ENCODE measurements at regions of chr16 and their contacts with region 1.

Region 1: DNA sequence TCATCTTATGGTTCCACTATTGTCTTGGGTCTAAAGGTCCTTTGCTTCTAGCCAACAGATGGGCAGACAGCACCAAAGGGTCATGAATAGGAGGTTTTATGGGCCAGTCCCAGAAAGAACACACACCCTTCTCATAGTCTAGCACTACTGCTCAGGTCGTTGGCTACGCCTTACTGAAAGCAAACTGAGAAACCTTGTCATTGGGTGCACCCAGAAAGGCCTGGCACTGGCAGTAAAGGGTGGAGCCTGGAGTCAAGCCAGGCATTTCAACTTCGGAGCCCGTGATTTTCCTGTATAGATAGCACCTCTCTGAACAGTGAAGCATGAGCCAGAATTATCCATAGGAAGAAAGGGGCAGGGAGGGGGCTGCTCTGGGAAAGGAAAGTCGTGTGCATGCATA is 74.9 kb downstream of the VAT1L start:
- DNase-seq: no peak
- ATAC-seq: no peak
- H3K4me3 ChIP-seq: no peak overlapping the region
- H3K4me3 Mint-ChIP-seq: no peak overlapping the region
- H3K27ac ChIP-seq: no peak overlapping the region
- H3K27ac Mint-ChIP-seq: no peak overlapping the region
- H3K4me1 ChIP-seq: no peaks in the 10 kb centered on the region
- H3K4me1 Mint-ChIP-seq: peaks cover 2 to 3% (median 3%) of the 10 kb centered on the region in 3 donors
- H3K27me3 ChIP-seq: peaks cover 0 to 5% of the 10 kb centered on the region in 2 experiments
- H3K27me3 Mint-ChIP-seq: peaks cover 6 to 24% of the 10 kb centered on the region in 2 donors

Region 2: DNA sequence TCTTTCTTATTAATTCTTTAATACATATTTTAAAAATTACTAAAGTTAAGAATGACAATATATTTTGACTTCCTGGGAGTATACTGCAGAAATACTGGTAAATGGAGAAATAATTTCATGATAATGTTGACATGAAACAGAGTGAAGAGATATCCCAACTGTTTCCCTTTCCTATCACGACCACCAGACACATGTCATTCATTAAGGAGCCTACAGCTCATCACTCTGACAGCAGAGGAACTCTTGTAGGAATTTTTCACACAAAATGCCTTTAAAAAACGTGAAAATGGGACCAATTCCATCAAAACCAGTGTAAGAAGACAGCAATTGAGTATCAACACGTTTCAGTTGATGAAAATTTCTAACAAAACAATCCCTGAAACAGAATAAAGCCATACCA is 1964.1 kb before region 1 on chr16:
- CTCF ChIA-PET with region 1: no interaction called
- POLR2A ChIA-PET with region 1: no interaction called
- DNase-seq: no peak
- ATAC-seq: no peak
- H3K4me3 ChIP-seq: no peak overlapping the region
- H3K4me3 Mint-ChIP-seq: no peak overlapping the region
- H3K27ac ChIP-seq: no peak overlapping the region
- H3K27ac Mint-ChIP-seq: no peak overlapping the region
- H3K4me1 ChIP-seq: no peaks in the 10 kb centered on the region
- H3K4me1 Mint-ChIP-seq: no peaks in the 10 kb centered on the region
- H3K27me3 ChIP-seq: no peaks in the 10 kb centered on the region
- H3K27me3 Mint-ChIP-seq: peaks cover 0 to 1% of the 10 kb centered on the region in 2 donors

Region 3: GRCh38 chr16:77905459-77905858 is 42.2 kb after region 1 on chr16:
- CTCF ChIA-PET with region 1: interaction called in 1 of 2 experiments, 13 read pairs
- POLR2A ChIA-PET with region 1: no interaction called
- DNase-seq: no peak
- ATAC-seq: no peak
- H3K4me3 ChIP-seq: no peak overlapping the region
- H3K4me3 Mint-ChIP-seq: no peak overlapping the region
- H3K27ac ChIP-seq: no peak overlapping the region
- H3K27ac Mint-ChIP-seq: no peak overlapping the region
- H3K4me1 ChIP-seq: no peaks in the 10 kb centered on the region
- H3K4me1 Mint-ChIP-seq: no peaks in the 10 kb centered on the region
- H3K27me3 ChIP-seq: no peaks in the 10 kb centered on the region
- H3K27me3 Mint-ChIP-seq: peaks cover 7 to 11% of the 10 kb centered on the region in 2 donors

Measured in T-cell (primary cell).